Endothelial cell of umbilical vein (primary cell): ENCODE measurements at regions of chr12 and their contacts with region 1.

Region 1: DNA sequence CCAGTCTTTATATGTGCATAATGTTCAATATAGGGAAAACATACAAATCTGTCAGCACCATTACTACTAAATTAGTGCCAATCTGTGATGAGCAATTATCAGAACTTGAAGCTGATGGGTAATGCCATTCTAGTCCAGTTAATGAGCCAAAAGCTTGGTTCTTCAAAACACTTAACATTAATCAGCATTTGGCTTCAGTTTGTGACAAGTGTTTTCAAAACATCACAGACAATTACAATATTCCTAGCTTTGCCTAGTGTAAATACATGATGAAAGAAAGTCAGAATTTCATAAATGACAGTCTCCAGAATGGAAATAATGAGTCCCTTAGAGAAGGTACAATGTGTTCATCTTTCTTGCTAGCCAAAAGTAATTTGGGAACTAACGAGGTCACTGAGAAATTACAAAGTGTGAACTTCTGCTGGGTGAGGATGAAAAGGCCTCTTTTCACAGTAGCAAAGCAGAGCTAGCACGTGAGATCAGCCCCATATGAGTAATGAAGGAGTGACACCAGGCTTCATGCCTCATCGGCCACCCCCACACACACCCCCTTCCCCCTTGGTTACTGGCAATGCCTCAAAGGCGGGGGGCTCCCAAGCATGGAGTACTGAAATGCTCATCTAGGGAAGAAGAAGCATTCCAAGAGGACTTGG is 180.6 kb upstream of the EEA1 start:
- DNase-seq: no peak
- H3K4me3 ChIP-seq: no peak overlapping the region
- H3K27ac ChIP-seq: no peak overlapping the region
- H3K4me1 ChIP-seq: peaks cover 31% of the 10 kb centered on the region
- H3K27me3 ChIP-seq: no peaks in the 10 kb centered on the region
- CTCF ChIP-seq: no peak
- POLR2A ChIP-seq: no peak

Region 2: GRCh38 chr12:93060666-93061471 is 48.8 kb before region 1 on chr12:
- CTCF ChIA-PET with region 1: no interaction called
- POLR2A ChIA-PET with region 1: no interaction called
- dilution Hi-C with region 1: no loop called
- intact Hi-C with region 1: no loop called
- DNase-seq: peak; percentile 56
- H3K4me3 ChIP-seq: no peak overlapping the region
- H3K27ac ChIP-seq: no peak overlapping the region
- H3K4me1 ChIP-seq: no peaks in the 10 kb centered on the region
- H3K27me3 ChIP-seq: peaks cover 2 to 7% of the 10 kb centered on the region in 2 experiments
- CTCF ChIP-seq: no peak
- POLR2A ChIP-seq: no peak

Region 3: GRCh38 chr12:93089805-93090569 is 19.7 kb before region 1 on chr12:
- CTCF ChIA-PET with region 1: interaction called, 4 read pairs
- POLR2A ChIA-PET with region 1: no interaction called
- dilution Hi-C with region 1: no loop called
- intact Hi-C with region 1: loop called (anchors 1 kb)
- DNase-seq: peak; percentile 92
- H3K4me3 ChIP-seq: no peak overlapping the region
- H3K27ac ChIP-seq: peak overlapping the region; percentile 83
- H3K4me1 ChIP-seq: peaks cover 41% of the 10 kb centered on the region
- H3K27me3 ChIP-seq: no peaks in the 10 kb centered on the region
- CTCF ChIP-seq: no peak
- POLR2A ChIP-seq: no peak

Region 4: GRCh38 chr12:93098077-93098476 is 11.6 kb before region 1 on chr12:
- CTCF ChIA-PET with region 1: interaction called, 26 read pairs
- POLR2A ChIA-PET with region 1: no interaction called
- dilution Hi-C with region 1: no loop called
- intact Hi-C with region 1: no loop called
- DNase-seq: peak; percentile 53
- H3K4me3 ChIP-seq: no peak overlapping the region
- H3K27ac ChIP-seq: no peak overlapping the region
- H3K4me1 ChIP-seq: no peaks in the 10 kb centered on the region
- H3K27me3 ChIP-seq: no peaks in the 10 kb centered on the region
- CTCF ChIP-seq: peak; percentile 21 to 22
- POLR2A ChIP-seq: no peak

Region 5: GRCh38 chr12:93135286-93136239 is 25.9 kb after region 1 on chr12:
- CTCF ChIA-PET with region 1: interaction called, 3 read pairs
- POLR2A ChIA-PET with region 1: no interaction called
- dilution Hi-C with region 1: no loop called
- intact Hi-C with region 1: loop called (anchors 2 kb)
- DNase-seq: peak; percentile 90
- H3K4me3 ChIP-seq: no peak overlapping the region
- H3K27ac ChIP-seq: peak overlapping the region; percentile 71
- H3K4me1 ChIP-seq: peaks cover 23% of the 10 kb centered on the region
- H3K27me3 ChIP-seq: no peaks in the 10 kb centered on the region
- CTCF ChIP-seq: no peak
- POLR2A ChIP-seq: no peak